Naive thymus-derived CD8-positive, alpha-beta T cell (primary cell): ENCODE measurements at regions of chr17 and their contacts with region 1.

Region 1: DNA sequence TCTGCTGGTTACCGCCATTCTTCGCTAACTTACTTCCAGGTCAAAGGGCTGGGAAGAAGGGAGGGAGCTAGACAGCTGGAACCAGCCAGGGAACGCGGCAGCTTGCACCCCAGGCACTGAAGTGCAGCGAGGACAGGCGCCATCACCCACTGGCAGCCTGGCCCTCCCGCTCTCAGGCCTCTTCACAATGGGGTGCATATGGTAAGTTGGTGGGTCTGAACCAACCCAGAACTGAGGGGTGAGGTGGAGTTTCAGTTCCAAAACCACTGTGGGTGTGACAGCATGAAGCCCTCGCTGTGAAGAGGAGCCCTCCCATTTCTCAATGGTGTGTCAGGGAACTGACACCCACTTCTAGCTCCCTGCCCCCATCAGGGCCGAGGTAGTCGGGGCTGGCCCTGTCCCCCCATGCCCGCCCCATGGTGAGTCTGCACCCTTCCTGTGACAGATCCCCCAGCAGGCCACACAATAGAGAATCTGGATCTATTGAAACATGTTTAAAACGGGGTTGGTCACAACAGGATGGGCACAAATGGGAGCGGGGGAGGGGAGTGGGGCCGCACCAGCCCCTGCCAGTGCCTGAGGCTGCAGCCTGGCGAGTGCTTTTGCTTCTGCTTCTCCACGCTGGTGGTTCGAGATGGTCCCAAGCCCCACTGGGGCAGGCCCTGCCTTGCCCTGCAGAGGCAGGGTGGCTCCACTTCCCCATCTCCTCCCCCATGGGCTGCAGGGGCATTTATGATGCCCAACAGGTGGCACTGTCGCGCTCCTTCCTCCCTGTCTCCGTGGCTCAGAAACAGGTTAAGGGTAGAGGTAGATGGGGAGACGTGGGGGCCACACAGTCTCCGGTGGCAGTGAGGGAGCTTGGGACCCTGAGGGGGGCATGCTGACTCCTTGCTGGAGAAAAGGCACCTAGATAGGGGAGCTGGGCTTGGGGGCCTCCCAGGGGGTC is 2.3 kb downstream of the LIMD2 start:
- DNase-seq: peak; percentile 76 to 94 (median 90)
- ATAC-seq: peak; percentile 24 to 41
- H3K4me3 Mint-ChIP-seq: peak overlapping the region; percentile 95 to 100 (median 98)
- H3K27ac Mint-ChIP-seq: peak overlapping the region; percentile 95 to 99 (median 98)
- H3K4me1 Mint-ChIP-seq: peaks cover 39 to 76% (median 63%) of the 10 kb centered on the region in 4 donors
- H3K27me3 Mint-ChIP-seq: no peaks in the 10 kb centered on the region

Region 2: DNA sequence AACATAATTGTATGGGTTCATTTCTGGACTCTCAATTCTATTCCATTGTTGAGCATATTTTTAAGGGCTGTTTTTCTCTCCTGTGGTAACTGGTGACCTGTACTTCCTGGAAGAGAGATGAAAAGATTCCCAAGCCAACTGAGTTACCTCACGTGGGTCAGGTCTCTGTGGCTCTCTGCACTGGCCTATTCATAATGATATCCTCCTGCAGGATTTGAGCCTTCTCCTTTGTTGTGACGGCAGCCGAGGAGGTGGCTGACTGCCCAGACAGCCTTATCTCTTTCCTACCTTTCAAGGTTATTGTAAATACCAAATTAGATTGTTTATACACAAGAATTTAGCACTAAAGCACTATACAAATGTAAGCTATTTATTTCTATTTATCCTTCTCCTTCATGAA is 223.4 kb before region 1 on chr17:
- POLR2A ChIA-PET with region 1: no interaction called
- DNase-seq: no peak
- ATAC-seq: no peak
- H3K4me3 Mint-ChIP-seq: no peak overlapping the region
- H3K27ac Mint-ChIP-seq: no peak overlapping the region
- H3K4me1 Mint-ChIP-seq: peaks cover 8 to 17% (median 12%) of the 10 kb centered on the region in 4 donors
- H3K27me3 Mint-ChIP-seq: peaks cover 8 to 43% (median 24%) of the 10 kb centered on the region in 5 donors

Region 3: DNA sequence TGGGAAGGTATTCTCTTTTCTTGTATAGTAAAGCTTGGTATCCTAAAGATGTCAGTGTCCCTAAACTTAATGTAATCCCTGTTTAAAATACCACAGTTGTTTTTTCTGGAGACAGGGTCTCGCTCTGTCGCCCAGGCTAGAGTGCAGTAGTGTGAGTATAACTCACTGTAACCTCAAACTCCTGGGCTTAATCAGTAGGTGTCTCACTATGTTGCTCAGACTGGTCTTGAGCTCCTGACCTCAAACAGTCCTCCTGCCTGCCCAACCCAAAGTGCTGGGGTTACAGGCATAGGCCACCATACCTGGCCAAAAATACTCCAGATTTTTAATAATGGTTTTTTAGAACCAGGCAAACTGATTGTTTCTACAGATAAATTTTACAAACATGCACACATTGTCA is 139.2 kb before region 1 on chr17:
- POLR2A ChIA-PET with region 1: no interaction called
- DNase-seq: no peak
- ATAC-seq: no peak
- H3K4me3 Mint-ChIP-seq: no peak overlapping the region
- H3K27ac Mint-ChIP-seq: peak overlapping the region in 3 of 10 donors; percentile 51 to 56 (median 53)
- H3K4me1 Mint-ChIP-seq: peaks cover 34 to 85% (median 78%) of the 10 kb centered on the region in 4 donors
- H3K27me3 Mint-ChIP-seq: no peaks in the 10 kb centered on the region

Region 4: DNA sequence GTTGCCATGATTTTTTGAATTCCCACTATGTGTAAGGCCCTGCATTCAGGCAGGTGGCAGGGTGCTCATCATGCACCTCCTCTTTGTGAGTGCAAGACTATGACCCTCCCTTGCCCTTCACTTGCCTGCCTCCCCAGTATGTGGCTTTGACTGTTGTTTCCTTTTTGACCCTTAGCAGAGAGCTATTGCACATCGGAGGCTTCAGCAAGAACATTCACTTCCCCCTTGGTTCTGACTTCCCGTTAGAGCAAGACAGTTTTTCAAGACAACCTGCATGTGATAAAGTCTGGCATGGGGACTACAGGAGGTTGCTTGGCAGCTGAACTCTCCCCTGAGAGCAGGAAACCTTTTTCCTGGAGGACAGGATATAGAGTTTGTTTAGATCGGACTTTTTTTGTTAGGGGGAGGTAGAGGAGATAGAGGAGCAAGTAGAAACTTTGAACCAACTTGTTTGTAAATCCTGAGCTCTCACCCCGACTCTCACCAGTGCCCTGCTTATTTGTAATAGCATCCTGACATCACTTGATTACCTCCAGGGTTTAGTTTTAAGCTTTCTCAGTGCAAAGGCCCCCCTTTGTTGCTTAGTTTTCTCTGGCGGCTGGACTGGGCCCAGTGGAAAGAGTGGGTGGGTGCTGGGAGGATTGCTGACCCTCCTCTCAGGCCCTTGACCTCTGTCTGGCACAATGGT is 31.9 kb before region 1 on chr17:
- POLR2A ChIA-PET with region 1: interaction called, 11 read pairs
- DNase-seq: peak in 1 of 10 donors; percentile 3
- ATAC-seq: peak in 1 of 2 donors; percentile 10
- H3K4me3 Mint-ChIP-seq: no peak overlapping the region
- H3K27ac Mint-ChIP-seq: peak overlapping the region in 9 of 10 donors; percentile 5 to 74 (median 33)
- H3K4me1 Mint-ChIP-seq: peaks cover 14 to 22% (median 21%) of the 10 kb centered on the region in 4 donors
- H3K27me3 Mint-ChIP-seq: no peaks in the 10 kb centered on the region

Region 5: GRCh38 chr17:63685041-63685440 is 12.6 kb before region 1 on chr17:
- POLR2A ChIA-PET with region 1: interaction called, 1,071 read pairs
- DNase-seq: no peak
- ATAC-seq: no peak
- H3K4me3 Mint-ChIP-seq: no peak overlapping the region
- H3K27ac Mint-ChIP-seq: peak overlapping the region in 3 of 10 donors; percentile 3 to 80 (median 72)
- H3K4me1 Mint-ChIP-seq: peaks cover 2 to 12% (median 7%) of the 10 kb centered on the region in 4 donors
- H3K27me3 Mint-ChIP-seq: no peaks in the 10 kb centered on the region

Region 6: DNA sequence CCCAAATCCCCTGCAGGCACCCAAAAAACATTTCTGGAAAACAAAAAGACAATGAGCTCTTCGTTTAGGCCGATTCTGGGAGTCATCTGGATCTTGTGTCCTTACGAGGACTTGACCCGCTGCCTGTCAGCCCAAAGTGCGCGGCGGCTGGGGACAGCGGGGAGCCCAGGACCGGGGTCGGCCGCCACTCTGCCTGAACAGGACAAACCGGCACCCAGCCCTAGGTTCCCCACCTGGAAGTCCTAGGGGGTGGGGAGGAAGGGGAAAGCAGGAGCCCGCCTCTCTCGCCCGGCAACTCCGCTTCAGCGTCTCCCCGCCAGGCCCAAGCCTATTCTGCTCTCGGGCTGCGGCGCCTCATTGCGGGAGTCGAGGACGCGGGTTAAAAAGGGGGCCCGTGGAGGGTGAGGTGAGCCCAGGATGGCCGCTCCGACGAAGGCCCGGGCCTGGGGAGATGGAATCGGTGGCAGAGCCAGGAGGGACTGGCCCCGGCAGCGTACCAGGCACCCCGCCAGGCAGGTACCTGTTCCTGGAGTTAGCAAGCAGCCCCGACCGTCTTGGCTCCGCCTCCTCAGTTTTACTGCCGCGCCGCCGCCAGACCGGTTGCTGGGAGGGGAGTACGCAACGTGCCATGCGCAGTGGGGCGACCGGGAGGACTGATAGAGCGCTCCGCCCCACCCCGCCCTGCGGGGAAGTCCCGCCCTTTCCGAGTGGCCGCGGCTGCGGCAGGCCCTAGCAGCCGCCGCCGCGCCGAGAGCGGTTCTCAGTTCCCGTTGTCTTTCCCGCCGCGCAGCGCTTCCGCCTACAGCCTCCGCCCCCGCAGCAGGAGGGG is 43.8 kb after region 1 on chr17 and contains the start of gene STRADA:
- POLR2A ChIA-PET with region 1: interaction called, 127 read pairs
- DNase-seq: peak; percentile 93 to 99 (median 98)
- ATAC-seq: peak; percentile 83 to 88
- H3K4me3 Mint-ChIP-seq: peak within 1 kb of the TSS; percentile 86 to 98 (median 93)
- H3K27ac Mint-ChIP-seq: peak within 1 kb of the TSS; percentile 91 to 98 (median 96)
- H3K4me1 Mint-ChIP-seq: peaks cover 15 to 28% (median 19%) of the 10 kb centered on the region in 4 donors
- H3K27me3 Mint-ChIP-seq: no peaks in the 10 kb centered on the region
- polyA plus RNA-seq, gene STRADA: 17.8 to 24.5 (median 23.6) TPM

Region 7: GRCh38 chr17:63773381-63774140 is 75.9 kb after region 1 on chr17 and contains the start of gene CCDC47:
- POLR2A ChIA-PET with region 1: interaction called, 264 read pairs
- DNase-seq: peak; percentile 94 to 99 (median 98)
- ATAC-seq: peak; percentile 86 to 88
- H3K4me3 Mint-ChIP-seq: peak within 1 kb of the TSS; percentile 87 to 99 (median 96)
- H3K27ac Mint-ChIP-seq: peak within 1 kb of the TSS; percentile 91 to 100 (median 99)
- H3K4me1 Mint-ChIP-seq: peaks cover 30 to 80% (median 70%) of the 10 kb centered on the region in 4 donors
- H3K27me3 Mint-ChIP-seq: no peaks in the 10 kb centered on the region
- polyA plus RNA-seq, gene CCDC47: 21.8 to 34.8 (median 26.0) TPM

Region 8: DNA sequence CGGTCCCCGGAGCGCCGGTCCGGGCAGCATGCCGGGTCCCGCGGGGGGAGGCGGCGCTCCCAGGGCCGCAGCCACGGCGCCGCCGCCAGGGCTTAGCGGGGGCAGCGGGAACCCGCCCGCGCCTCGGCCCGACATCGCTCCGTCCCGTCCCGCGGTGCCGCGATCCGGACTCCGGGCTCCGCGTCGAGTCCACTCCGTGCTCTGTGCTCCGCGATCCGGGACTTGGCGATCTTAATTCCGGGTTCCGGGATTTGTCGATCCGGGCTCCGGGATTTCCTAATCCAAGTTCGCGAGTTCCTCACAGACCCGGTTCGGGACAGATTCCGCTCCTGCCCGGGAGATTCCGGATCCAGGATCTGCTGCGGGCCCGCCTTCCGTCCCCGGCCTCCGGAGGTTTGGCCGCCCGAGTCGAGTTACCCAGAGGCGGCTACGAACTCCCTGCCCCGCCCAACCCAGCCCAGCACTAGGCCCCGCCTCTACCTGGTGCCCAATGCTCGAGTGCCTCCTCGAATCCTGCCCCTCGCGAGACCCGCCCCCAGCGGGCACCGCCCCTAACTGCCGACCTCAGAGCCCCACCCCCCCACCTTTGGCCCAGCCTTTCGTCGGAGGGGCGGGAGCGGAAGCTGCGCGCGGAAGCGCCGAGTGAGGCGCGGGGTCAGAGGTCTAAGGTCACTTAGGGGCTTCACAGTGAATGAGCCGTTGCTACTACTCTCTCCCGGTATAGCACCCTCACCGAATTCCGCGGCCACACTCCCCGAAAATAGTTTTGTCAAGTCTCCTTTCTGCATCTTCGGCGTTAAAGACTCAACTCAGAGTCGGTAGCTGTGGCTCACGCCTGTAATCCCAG is 145.1 kb after region 1 on chr17 and contains the start of gene SMARCD2:
- POLR2A ChIA-PET with region 1: interaction called, 205 read pairs
- DNase-seq: peak; percentile 94 to 99 (median 98)
- ATAC-seq: peak; percentile 86 to 88
- H3K4me3 Mint-ChIP-seq: peak within 1 kb of the TSS; percentile 90 to 98 (median 94)
- H3K27ac Mint-ChIP-seq: peak within 1 kb of the TSS; percentile 90 to 97 (median 94)
- H3K4me1 Mint-ChIP-seq: peaks cover 24 to 52% (median 52%) of the 10 kb centered on the region in 4 donors
- H3K27me3 Mint-ChIP-seq: no peaks in the 10 kb centered on the region
- polyA plus RNA-seq, gene SMARCD2: 65.9 to 112 (median 91.5) TPM

Region 9: DNA sequence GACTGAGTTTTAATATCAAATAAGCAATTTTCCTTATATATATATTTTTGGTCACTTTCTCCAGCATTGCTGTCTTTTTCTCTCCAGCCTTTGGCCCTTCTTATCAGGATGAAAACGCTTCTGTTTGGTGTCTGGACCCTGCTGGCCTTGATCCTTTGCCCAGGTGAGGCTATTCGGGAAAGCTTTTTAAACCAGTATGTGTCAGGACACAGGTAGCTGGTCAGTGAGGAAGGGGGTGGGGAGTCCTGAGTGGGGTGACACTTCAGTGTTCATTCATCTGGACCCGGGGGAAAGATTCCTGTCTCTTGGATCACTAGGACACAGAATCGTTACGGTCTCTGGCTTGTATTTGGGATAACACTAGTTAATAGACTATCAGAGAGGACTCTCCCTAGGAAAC is 157.1 kb after region 1 on chr17:
- POLR2A ChIA-PET with region 1: no interaction called
- DNase-seq: no peak
- ATAC-seq: no peak
- H3K4me3 Mint-ChIP-seq: no peak overlapping the region
- H3K27ac Mint-ChIP-seq: no peak overlapping the region
- H3K4me1 Mint-ChIP-seq: peaks cover 0 to 3% (median 0%) of the 10 kb centered on the region in 4 donors
- H3K27me3 Mint-ChIP-seq: peaks cover 0 to 2% (median 0%) of the 10 kb centered on the region in 5 donors